Activated T-helper 1 cell treated with anti-CD3 and anti-CD28 coated beads, Interleukin-12 subunit alpha, Interleukin-12 subunit beta, Interleukin-2, Interleukin-4 antibody, amounts not matched to agents 30 ng/mL and 10 ng/mL and 1 ng/mL, durations not matched to agents 14 hours and 24 hours and 36 hours (primary cell): ENCODE measurements at regions of chr1 and their contacts with region 1.

Region 1: DNA sequence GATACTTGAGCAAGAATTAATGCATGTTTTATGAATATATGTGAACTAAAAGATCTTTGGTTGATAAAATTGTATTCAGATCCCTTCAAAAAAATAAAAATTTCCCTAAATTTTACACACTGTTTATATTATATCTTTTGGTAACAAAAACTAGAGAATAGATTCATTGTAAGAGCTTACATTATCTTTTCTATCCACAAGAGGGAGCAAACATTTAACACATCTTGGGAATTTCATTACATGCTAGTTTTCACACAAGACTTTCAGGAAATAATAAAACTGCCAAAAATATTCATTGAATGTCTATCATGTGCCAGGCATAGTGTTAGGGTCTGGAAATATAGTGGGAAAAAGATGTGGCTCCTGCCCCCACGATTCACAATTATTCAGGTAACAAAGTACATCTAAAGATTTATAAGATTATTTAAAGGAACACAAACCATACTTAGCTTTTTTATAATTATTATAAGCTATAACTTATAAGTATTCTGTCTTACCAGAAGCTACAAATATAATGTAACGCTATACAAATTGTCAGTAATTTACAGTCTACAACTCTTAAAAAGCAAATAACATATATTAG is 30.6 kb downstream of the FAF1 start:
- DNase-seq: no peak
- H3K4me3 Mint-ChIP-seq: no peak overlapping the region
- H3K27ac Mint-ChIP-seq: no peak overlapping the region
- H3K4me1 Mint-ChIP-seq: peaks cover 25% of the 10 kb centered on the region
- H3K27me3 Mint-ChIP-seq: no peaks in the 10 kb centered on the region

Region 2: DNA sequence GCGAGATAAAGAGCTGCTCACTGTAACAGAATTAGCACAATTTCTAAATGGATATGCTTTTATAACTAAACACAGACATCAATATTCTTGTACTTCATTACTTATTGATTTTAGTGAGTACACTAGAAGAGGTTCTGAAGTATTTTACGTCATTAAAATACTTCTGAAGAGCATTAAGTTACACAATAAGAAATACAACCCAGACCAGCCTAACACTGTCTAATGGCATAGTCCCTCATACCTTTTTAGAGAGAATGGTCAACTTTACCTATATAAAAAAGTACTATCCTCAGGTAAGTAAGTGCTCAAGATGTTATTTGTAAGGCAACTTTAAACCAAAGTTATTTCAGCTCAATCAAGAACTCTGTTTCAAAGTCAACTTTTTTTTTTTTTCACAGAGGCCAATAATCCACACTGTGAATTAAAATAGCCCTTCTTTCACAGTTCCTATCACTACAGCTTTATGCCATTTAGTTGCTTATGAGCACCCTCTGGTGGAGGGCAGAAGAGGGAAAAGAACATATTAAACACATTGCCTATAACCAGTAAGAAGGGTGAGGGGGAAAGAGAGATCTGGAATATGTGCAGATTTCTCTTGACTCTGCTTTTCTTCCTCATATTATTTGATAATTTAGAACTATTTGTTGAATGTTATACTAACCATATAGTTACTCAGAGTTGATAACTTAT is 324.1 kb before region 1 on chr1:
- intact Hi-C with region 1: no loop called
- DNase-seq: no peak
- H3K4me3 Mint-ChIP-seq: no peak overlapping the region
- H3K27ac Mint-ChIP-seq: no peak overlapping the region
- H3K4me1 Mint-ChIP-seq: no peaks in the 10 kb centered on the region
- H3K27me3 Mint-ChIP-seq: no peaks in the 10 kb centered on the region

Region 3: DNA sequence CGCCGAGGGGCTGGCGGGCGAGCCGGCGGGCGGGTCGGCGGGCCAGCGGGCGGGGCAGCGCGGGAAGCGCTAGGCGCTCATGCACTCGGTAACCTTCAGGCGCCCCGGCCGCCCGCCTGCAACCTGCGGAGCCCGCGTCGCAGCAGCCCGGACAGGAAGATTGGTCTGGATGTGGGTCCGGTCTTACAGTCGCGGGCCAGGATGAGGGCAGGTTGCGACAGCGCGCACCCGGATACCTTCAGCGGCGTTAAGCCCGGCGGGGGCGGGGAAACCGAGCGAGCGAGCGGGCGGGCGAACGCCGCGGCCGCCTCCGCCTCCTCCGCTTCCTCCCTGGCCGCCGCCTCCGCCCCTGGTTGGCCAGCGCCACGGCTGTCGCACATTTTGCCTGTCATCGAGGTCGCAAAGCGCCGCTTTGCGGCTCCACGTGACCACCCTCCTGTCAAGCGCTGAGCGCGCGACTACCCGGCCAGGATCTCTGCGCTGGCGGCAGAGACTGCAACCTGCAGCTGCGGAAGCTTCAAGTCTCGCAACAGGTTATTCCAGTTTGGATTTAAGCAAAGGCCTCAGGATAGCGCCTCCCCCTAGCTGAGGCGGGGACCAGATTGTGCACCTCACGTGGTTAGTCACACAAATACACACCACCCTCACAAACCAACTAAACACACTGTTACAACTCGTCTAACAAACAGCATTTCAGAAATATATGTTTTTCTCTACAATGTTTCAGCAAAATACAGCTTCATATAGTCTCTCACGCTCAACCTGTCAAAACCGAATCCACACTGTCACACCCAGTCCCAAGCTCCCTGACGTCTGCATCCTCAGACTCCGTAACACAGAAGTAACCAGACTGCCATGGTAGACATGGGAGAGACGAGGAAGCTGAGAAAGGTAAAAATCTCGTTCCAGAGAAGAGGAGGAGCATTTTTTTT is 30.7 kb after region 1 on chr1 and contains the start of gene FAF1:
- intact Hi-C with region 1: loop called (anchors 1 kb)
- DNase-seq: peak; percentile 98
- H3K4me3 Mint-ChIP-seq: peak within 1 kb of the TSS; percentile 94
- H3K27ac Mint-ChIP-seq: peak within 1 kb of the TSS; percentile 98
- H3K4me1 Mint-ChIP-seq: peaks cover 23% of the 10 kb centered on the region
- H3K27me3 Mint-ChIP-seq: peaks cover 8% of the 10 kb centered on the region
- total RNA-seq, gene FAF1: 58.8 and 62.0 TPM in 2 replicates

Region 4: DNA sequence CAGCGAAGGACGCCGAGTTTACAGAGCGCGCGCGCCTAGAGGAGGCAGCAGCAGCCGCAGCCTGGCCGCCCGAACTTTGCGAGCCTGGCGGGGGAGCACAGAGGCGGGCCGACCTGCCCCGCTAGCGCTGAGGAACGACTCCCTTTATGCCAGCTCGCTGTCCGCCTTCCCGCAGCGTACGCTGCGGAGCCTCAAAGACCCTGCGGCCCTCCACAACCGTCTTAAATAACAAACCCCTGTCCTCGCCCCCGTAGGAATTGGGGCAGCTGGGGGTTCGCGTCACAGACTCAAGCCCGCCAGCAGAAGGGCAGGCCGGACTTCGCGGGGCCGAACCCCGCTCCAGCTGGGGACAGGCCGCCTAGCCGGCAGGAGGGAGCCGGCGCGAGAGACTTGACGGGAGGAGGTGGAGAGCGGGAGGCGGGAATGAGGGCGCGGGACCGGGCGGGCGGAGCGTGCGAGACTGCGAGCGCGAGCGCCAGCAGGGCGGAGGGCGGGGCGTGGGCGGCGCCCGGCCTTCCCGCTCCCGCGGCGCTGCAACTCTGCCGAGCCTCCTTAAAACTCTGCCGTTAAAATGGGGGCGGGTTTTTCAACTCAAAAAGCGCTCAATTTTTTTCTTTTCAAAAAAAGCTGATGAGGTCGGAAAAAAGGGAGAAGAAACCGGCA is 38.8 kb after region 1 on chr1:
- intact Hi-C with region 1: loop called (anchors 2 kb)
- DNase-seq: peak; percentile 82
- H3K4me3 Mint-ChIP-seq: peak overlapping the region; percentile 99
- H3K27ac Mint-ChIP-seq: peak overlapping the region; percentile 98
- H3K4me1 Mint-ChIP-seq: peaks cover 39% of the 10 kb centered on the region
- H3K27me3 Mint-ChIP-seq: peaks cover 10% of the 10 kb centered on the region

Region 5: DNA sequence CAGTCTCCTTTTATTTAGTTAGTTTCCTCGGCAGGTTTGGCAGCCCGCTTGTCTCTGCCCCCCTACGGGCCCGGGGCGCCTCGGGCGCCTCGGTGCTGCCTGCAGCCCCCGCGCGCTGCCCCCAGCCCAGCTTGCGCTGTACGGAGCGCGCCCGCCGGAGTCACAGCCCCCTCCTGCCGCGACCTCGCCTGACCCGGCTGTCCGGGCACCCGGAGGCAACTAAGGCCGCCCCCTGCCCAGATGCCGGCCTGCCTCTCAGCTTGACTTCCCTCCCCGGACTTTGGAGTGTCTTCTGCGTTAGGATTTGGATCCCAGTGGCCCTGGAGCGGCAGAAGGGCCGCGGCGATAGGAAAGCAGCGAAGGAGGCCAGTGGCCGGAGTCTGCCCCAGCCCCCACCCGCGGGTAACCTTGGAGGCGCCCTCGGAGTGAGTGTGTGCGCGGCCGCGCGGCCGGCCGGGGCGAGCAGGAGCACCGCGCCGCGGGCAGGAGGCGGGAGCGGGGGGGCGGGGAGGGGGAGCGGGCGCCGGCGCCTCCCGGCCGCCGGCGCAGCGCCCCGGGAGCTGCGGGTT is 48.2 kb after region 1 on chr1:
- intact Hi-C with region 1: loop called (anchors 2 kb)
- DNase-seq: no peak
- H3K4me3 Mint-ChIP-seq: peak overlapping the region; percentile 87
- H3K27ac Mint-ChIP-seq: peak overlapping the region; percentile 48
- H3K4me1 Mint-ChIP-seq: peaks cover 31% of the 10 kb centered on the region
- H3K27me3 Mint-ChIP-seq: peaks cover 37% of the 10 kb centered on the region

Region 6: DNA sequence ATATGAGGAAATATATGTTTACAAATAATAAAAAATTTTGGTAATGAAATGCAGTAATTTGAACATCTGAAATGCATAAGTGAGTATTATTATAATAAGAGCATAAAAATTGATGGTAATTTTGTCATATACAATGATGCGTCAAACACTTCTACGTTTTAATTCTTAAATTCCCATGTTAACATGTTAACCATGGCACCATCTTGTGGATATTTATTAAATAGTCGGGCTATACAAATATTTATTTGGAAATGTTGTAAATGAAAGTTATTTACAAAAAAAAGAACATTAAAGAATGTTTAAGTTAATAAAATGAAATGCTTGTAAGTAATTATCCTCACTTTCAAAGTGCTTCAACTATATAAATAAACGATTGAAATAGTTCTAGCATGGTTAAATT is 115.4 kb after region 1 on chr1:
- intact Hi-C with region 1: loop called (anchors 5 kb)
- DNase-seq: no peak
- H3K4me3 Mint-ChIP-seq: no peak overlapping the region
- H3K27ac Mint-ChIP-seq: no peak overlapping the region
- H3K4me1 Mint-ChIP-seq: no peaks in the 10 kb centered on the region
- H3K27me3 Mint-ChIP-seq: peaks cover 13% of the 10 kb centered on the region

Region 7: GRCh38 chr1:51192213-51192843 is 262.9 kb after region 1 on chr1:
- intact Hi-C with region 1: loop called (anchors 1 kb)
- DNase-seq: peak; percentile 19
- H3K4me3 Mint-ChIP-seq: no peak overlapping the region
- H3K27ac Mint-ChIP-seq: no peak overlapping the region
- H3K4me1 Mint-ChIP-seq: no peaks in the 10 kb centered on the region
- H3K27me3 Mint-ChIP-seq: peaks cover 17% of the 10 kb centered on the region